ENCODE measurements at regions of chr3 and their contacts with region 1.

Region 1: GRCh38 chr3:33372218-33373081 is 67.8 kb downstream of the UBP1 start:
- DNase-seq: peak; percentile 29 to 53
- ATAC-seq: peak; percentile 70 to 78
- H3K4me3 ChIP-seq: no peak overlapping the region
- H3K27ac ChIP-seq: no peak overlapping the region
- H3K4me1 ChIP-seq: peaks cover 5% of the 10 kb centered on the region; the same call in 1 of the 3 replicates
- CTCF ChIP-seq: peak; percentile 92
- EP300 ChIP-seq: no peak
- POLR2A ChIP-seq: no peak
- RAD21 ChIP-seq: peak; percentile 88 to 89

Region 2: DNA sequence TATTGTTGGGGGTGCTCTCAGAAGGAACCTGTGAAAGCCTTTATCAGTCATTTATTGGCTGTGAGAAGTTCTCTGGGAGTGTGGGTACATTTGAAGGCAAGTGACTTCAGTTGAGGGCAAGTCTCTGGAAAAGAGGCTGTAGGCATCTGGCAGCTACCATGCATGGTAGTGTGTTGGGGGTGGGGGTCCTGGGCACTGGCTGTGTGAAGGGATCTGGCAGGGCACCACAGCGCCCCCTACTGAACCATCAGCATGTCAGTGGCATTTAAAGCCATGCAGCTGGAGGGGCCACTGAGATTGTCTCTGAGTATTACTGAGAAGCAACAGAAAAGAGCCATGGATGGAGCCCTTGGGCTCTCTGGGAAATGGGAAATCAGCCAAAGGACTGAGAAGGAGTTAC is 228.0 kb before region 1 on chr3:
- CTCF ChIA-PET with region 1: interaction called, 17 read pairs
- POLR2A ChIA-PET with region 1: no interaction called
- DNase-seq: peak; percentile 27 to 49
- ATAC-seq: peak; percentile 15 to 69; a peak in 3 of 6 replicates
- H3K4me3 ChIP-seq: no peak overlapping the region
- H3K27ac ChIP-seq: no peak overlapping the region
- H3K4me1 ChIP-seq: no peaks in the 10 kb centered on the region
- CTCF ChIP-seq: peak; percentile 52
- EP300 ChIP-seq: no peak
- POLR2A ChIP-seq: no peak
- RAD21 ChIP-seq: peak in 1 of 2 experiments; percentile 22; a peak in 1 of 5 replicates

Region 3: DNA sequence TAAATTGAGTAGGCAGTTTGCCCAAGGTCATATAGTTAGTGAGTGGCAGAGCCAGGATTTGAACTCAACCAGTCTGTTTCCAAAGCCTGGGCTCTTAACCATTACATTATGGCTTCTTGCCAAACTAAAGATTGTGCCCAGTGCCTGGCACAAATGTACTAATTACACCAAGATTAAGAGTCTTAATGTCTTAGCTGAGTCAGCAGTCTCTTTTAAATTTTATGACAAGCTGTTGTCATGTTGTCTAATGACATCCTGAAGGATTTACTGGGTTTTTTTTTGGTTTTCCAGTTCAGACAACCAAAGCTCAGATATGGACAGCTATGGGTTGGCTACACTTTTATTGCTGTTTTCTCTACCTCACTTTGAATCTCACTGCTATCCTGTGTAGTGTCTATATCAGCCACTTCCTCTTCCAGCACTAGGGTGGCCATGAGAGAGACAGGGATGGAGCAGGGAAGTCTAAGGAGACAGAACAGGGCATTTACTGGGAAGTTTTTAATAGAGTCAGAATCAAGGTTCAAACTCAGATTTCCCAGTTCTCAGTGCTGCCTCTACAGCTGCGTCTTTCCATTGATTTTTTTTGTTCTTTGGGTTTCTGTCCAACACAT is 84.7 kb before region 1 on chr3:
- CTCF ChIA-PET with region 1: interaction called, 16 read pairs
- POLR2A ChIA-PET with region 1: no interaction called
- DNase-seq: no peak
- ATAC-seq: no peak
- H3K4me3 ChIP-seq: no peak overlapping the region
- H3K27ac ChIP-seq: no peak overlapping the region
- H3K4me1 ChIP-seq: no peaks in the 10 kb centered on the region
- CTCF ChIP-seq: no peak
- EP300 ChIP-seq: no peak
- POLR2A ChIP-seq: no peak
- RAD21 ChIP-seq: no peak

Region 4: GRCh38 chr3:33360136-33360825 is 12.2 kb before region 1 on chr3:
- CTCF ChIA-PET with region 1: interaction called, 36 read pairs
- POLR2A ChIA-PET with region 1: no interaction called
- DNase-seq: peak; percentile 31 to 57
- ATAC-seq: peak; percentile 73 to 85
- H3K4me3 ChIP-seq: peak overlapping the region; percentile 15; the same call in 1 of the 3 replicates
- H3K27ac ChIP-seq: peak overlapping the region; percentile 41 to 83; a peak in 5 of 6 replicates
- H3K4me1 ChIP-seq: peaks cover 49% of the 10 kb centered on the region
- CTCF ChIP-seq: no peak
- EP300 ChIP-seq: no peak
- POLR2A ChIP-seq: no peak
- RAD21 ChIP-seq: no peak

Region 5: GRCh38 chr3:33433843-33434242 is 61.4 kb after region 1 on chr3:
- CTCF ChIA-PET with region 1: interaction called, 20 read pairs
- POLR2A ChIA-PET with region 1: no interaction called
- DNase-seq: no peak
- ATAC-seq: no peak
- H3K4me3 ChIP-seq: no peak overlapping the region
- H3K27ac ChIP-seq: no peak overlapping the region
- H3K4me1 ChIP-seq: peaks cover 78% of the 10 kb centered on the region
- CTCF ChIP-seq: no peak
- EP300 ChIP-seq: no peak
- POLR2A ChIP-seq: no peak
- RAD21 ChIP-seq: no peak

Measured in A549 (cell line).